AG04450 (cell line): ENCODE measurements at regions of chr3 and their contacts with region 1.

Region 1: GRCh38 chr3:112582244-112582874 is 20.5 kb downstream of the SLC35A5 start:
- DNase-seq: peak; percentile 55
- H3K4me3 ChIP-seq: no peak overlapping the region
- H3K27ac ChIP-seq: no peak overlapping the region
- H3K27me3 ChIP-seq: no peaks in the 10 kb centered on the region
- CTCF ChIP-seq: peak; percentile 73

Region 2: DNA sequence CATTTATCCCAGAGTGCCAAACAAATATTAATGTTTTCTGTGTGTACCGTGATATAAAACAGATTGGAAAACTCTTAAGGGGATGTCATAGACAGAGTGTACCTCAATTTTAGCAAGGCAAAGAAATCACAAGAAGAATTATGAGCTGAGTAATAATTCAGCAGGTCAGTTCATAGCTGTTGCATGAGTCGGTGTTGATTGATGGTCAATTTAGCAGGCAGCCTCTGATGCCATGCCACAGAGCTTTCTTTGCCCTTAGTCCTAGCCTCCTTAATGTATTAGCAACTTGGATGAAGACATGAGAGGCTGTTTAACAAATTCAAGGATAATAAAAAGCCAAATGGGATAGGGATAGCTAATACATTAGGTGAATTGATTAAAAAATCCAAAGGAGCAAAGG is 13.7 kb before region 1 on chr3:
- CTCF ChIA-PET with region 1: interaction called, 20 read pairs
- POLR2A ChIA-PET with region 1: no interaction called
- DNase-seq: no peak
- H3K4me3 ChIP-seq: no peak overlapping the region
- H3K27ac ChIP-seq: no peak overlapping the region
- H3K27me3 ChIP-seq: no peaks in the 10 kb centered on the region
- CTCF ChIP-seq: no peak

Region 3: GRCh38 chr3:112605285-112605684 is 22.9 kb after region 1 on chr3:
- CTCF ChIA-PET with region 1: interaction called, 16 read pairs
- POLR2A ChIA-PET with region 1: interaction called, 3 read pairs
- DNase-seq: peak; percentile 90
- H3K4me3 ChIP-seq: no peak overlapping the region
- H3K27ac ChIP-seq: peak overlapping the region; percentile 73
- H3K27me3 ChIP-seq: no peaks in the 10 kb centered on the region
- CTCF ChIP-seq: no peak

Region 4: DNA sequence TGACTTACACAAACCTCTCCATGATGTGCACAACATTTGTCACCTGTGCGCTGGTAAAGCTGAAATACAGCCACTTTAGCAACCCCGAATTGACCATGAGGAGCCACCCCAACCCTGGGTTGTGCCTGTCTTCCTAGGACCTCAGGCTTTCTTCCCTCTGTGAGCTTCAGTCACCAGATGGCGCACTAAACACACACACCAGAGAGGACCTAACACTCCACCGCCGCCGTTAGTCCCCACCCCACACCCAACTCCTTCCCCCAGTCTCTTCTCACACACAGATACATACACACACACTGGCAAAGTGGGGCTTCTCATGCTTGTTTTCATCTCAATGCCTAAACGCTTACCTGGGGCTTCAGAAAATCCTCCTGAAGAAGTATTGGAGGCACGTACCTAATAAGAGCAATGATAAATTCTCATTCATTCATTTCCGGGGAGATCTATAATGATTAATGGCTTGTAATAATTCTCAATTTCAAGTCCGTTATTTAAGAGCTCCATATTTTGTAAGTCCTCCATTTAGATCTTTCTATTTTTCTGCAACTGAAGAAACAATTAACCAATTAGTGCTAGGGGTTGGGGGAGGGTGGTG is 60.6 kb after region 1 on chr3:
- CTCF ChIA-PET with region 1: interaction called, 32 read pairs
- POLR2A ChIA-PET with region 1: interaction called, 6 read pairs
- DNase-seq: peak; percentile 86
- H3K4me3 ChIP-seq: peak overlapping the region; percentile 28
- H3K27ac ChIP-seq: no peak overlapping the region
- H3K27me3 ChIP-seq: no peaks in the 10 kb centered on the region
- CTCF ChIP-seq: peak; percentile 96

Region 5: DNA sequence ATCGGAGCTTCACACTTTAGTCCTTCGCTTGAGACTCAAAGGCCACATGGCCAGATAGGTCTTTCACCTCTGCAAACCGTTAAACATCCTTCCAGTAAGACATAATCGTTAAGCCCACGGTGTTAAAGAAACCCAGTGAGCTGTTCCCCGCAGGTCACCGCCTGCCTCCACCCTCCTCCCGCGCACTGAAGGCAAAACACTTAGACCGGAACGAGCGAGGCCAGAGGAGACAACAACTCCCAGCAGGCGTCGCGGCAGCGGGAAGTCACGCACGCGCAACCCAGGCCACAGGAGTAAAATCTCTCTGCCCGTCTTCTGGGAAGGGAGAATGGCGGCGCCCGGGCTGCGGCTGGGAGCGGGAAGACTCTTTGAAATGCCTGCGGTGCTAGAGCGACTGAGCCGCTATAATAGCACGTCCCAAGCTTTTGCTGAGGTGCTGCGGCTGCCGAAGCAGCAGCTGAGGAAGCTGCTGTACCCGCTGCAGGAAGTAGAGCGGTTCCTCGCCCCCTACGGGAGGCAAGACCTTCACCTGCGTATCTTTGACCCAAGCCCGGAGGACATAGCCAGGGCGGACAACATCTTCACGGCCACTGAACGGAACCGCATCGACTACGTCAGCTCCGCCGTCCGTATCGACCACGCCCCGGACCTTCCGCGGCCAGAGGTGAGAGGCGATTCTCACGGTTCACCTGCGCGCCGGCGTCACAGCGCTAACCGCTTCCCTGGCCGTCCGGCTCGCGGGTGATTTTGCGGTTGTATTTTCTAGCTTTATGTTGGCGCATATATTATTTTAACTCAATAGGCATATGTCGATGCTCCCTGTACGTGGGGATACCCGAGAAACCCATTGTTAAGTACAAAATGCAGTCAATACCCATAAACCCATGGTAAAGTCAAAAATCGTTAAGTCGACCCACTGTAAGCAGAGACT is 408.6 kb after region 1 on chr3 and contains the start of gene GTPBP8:
- CTCF ChIA-PET with region 1: interaction called, 14 read pairs
- POLR2A ChIA-PET with region 1: no interaction called
- DNase-seq: peak; percentile 59
- H3K4me3 ChIP-seq: peak within 1 kb of the TSS; percentile 94
- H3K27ac ChIP-seq: peak within 1 kb of the TSS; percentile 89
- H3K27me3 ChIP-seq: no peaks in the 10 kb centered on the region
- CTCF ChIP-seq: no peak
- polyA plus RNA-seq, gene GTPBP8: 14.9 and 17.3 TPM in 2 replicates